Activated T-helper 2 cell treated with anti-CD3 and anti-CD28 coated beads, Interferon-gamma antibody, Interleukin-2, Interleukin-4, amounts not matched to agents 10 μg/mL and 5 μg/mL and 100 μg/mL, durations not matched to agents 14 hours and 24 hours and 36 hours (primary cell): ENCODE measurements at regions of chr14 and their contacts with region 1.

Region 1: GRCh38 chr14:54566410-54567223 is at the start of gene SAMD4A:
- DNase-seq: peak; percentile 43
- H3K4me3 Mint-ChIP-seq: peak within 1 kb of the TSS; percentile 91
- H3K27ac Mint-ChIP-seq: peak within 1 kb of the TSS; percentile 84
- H3K4me1 Mint-ChIP-seq: peaks cover 17% of the 10 kb centered on the region
- H3K27me3 Mint-ChIP-seq: peaks cover 25% of the 10 kb centered on the region
- total RNA-seq, gene SAMD4A: 4.3 and 5.1 TPM in 2 replicates

Region 2: DNA sequence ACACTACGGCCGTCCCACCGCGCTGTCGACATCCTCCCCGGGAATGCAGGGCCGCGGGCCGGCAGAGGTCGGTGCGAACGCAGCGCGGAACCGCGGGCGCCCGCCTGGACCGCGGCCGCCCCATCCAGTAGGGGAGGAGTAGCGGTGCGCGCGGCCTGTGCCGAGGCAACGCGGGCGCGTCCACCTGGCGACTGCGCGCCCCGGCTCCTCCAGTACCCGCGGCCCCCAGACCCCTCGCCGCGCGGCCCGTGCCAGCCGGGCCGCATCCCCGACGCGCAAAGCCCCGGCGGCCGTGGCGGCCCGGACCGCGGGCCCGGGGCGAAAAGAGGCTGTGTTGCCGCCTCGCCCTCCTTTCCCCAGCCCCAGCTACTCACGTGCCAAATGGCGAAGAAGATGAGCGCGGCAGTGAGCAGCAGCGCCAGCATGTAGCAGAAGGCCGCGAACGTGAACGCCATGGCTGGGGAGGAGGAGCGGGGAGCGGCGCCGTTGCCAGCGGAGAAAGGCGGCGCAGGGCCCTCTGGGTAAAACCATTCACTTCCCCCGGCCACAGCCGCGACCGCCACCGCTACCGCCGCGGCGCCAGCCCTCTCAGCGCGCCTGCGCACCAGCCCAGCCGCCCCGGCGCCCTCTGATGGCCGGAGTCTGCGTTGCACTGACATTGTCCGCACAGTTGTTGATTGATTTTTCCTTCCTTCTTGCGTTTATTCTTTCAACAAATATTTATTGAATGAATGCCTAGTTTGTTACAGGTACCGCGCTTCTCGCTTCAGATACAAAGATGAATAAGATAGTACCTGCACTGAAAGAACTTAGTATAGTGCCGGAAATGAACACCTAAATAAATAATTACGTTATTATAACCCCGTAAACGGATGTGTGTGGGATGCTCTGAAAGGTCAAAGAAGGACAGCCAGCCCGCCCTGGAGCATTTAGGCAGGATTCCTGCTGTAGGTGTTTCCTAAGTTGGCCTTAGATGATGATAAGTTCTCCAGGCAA is 125.4 kb before region 1 on chr14 and contains the start of gene CNIH1:
- intact Hi-C with region 1: loop called (anchors 5 kb)
- DNase-seq: peak; percentile 90
- H3K4me3 Mint-ChIP-seq: peak within 1 kb of the TSS; percentile 95
- H3K27ac Mint-ChIP-seq: peak within 1 kb of the TSS; percentile 97
- H3K4me1 Mint-ChIP-seq: peaks cover 47% of the 10 kb centered on the region
- H3K27me3 Mint-ChIP-seq: peaks cover 5% of the 10 kb centered on the region
- total RNA-seq, gene CNIH1: 113 and 115 TPM in 2 replicates

Region 3: DNA sequence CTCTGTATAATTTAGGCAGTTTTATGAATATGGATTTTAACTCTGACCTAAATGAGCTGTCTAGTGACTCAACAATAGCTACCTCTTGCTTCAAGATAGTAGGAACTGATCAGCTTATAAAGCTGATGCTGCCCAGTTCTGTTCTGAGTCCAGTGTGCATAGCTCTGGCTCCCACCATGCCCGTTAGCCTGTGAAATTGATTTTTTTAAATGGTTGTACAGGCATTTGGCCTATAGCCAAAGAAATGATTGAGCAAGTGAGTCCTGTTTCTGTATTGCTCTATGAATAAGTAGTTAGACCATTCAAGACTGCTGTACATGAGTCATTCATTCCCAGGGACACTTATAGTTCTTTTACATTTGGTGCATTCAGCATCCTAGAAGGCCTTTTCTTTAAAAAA is 36.7 kb after region 1 on chr14:
- intact Hi-C with region 1: no loop called
- DNase-seq: no peak
- H3K4me3 Mint-ChIP-seq: no peak overlapping the region
- H3K27ac Mint-ChIP-seq: no peak overlapping the region
- H3K4me1 Mint-ChIP-seq: no peaks in the 10 kb centered on the region
- H3K27me3 Mint-ChIP-seq: peaks cover 18% of the 10 kb centered on the region

Region 4: DNA sequence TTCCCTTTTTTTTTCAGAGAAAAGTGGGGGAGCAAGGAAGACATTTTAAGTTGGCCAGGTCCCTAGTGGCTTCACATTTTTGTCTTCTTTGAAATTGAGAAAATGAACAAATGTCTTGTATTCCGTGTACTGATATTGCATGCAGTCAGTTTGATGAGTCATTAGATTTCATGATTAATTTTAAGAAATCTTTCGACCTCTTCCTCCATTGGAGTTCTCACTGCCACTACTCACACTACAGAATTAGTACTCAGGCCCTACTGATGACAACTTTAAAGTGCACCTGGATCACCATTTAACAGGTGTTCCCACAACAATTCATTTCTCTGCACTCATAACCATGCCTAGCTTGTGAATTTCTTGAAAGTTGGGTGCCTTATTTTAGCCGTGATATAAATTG is 50.9 kb after region 1 on chr14:
- intact Hi-C with region 1: no loop called
- DNase-seq: no peak
- H3K4me3 Mint-ChIP-seq: no peak overlapping the region
- H3K27ac Mint-ChIP-seq: no peak overlapping the region
- H3K4me1 Mint-ChIP-seq: peaks cover 16% of the 10 kb centered on the region
- H3K27me3 Mint-ChIP-seq: peaks cover 14% of the 10 kb centered on the region

Region 5: DNA sequence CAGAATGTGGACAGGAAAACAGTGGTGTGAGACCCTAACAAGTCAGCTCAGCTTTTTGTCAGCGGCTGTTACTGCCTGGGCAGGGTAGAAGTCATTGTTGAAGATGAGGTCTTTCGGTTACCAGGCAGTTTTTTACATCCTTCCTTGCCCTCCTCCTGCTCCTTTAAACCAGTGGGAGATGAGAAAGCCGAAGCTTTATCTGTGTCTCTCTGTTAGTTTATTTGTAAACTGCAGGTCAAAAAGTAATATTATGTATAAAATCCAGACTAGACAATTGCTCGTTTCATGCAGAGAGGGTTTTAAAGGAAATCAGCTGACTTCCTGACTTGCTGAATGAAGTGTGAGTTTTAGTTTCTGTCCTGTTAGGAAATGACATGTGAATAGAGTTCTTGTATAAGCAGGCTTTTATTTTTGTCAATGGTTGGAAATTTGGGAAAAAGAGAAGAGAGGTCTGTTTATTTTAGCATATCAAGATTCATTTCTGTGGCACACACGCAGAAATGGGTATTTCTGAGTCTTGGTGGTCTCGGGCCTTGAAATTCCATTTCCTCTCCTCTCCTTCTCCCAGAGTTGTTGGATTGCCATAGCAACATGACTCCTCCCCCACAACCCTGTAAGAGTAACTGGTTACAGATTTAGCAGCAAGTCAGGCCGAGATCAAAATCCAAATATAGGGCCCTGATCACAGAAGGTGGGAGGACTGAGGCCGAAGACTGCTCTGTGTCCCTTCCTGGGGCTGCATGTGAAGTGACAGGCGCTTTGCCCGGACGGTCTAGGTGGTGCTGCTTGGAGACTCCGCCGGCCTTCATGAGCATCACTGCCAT is 61.1 kb after region 1 on chr14:
- intact Hi-C with region 1: loop called (anchors 5 kb)
- DNase-seq: peak; percentile 27
- H3K4me3 Mint-ChIP-seq: peak overlapping the region; percentile 52
- H3K27ac Mint-ChIP-seq: peak overlapping the region; percentile 76
- H3K4me1 Mint-ChIP-seq: peaks cover 44% of the 10 kb centered on the region
- H3K27me3 Mint-ChIP-seq: no peaks in the 10 kb centered on the region

Region 6: DNA sequence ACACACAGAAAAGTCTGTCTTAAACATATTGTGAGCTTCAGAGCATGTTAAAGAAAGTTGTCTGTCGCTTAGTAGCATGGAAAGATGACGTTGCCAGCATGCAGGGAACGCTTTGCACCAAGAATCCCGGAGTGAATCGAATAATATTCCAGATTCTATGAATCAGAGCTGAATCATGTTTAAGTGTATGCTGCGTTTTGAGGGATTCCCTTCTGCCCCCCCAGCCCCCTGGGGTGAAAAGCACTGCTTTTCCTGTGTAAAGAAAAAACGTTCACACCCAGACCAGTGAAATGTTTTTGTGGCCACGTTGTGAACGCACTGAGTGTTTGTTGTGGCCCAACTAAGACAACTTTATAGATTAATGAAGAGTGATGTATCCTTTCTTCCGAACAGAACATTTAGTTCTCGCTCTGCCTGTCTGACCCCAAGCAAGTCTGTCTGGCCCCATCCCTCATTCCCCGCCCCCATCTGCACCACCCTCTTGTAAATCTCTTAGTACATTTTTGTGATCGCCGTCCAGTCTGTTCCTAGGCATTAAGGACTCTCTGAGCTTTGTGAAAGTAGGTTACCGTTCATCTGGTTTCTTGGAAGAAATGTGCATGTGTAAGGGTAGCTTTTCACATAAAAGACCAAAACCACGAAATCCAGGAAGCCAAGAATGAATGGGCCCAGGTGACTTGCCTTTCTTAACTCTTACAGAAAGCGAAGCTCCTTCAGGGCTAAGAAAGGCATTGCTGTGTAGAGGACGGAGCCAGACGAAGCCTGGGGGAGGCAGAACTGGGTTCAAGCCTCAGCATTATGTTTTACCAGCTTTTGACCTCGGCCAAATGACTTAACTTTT is 103.3 kb after region 1 on chr14:
- intact Hi-C with region 1: loop called (anchors 5 kb)
- DNase-seq: no peak
- H3K4me3 Mint-ChIP-seq: no peak overlapping the region
- H3K27ac Mint-ChIP-seq: no peak overlapping the region
- H3K4me1 Mint-ChIP-seq: peaks cover 51% of the 10 kb centered on the region
- H3K27me3 Mint-ChIP-seq: peaks cover 21% of the 10 kb centered on the region

Region 7: GRCh38 chr14:54730156-54730961 is 163.7 kb after region 1 on chr14:
- intact Hi-C with region 1: loop called (anchors 2 kb)
- DNase-seq: peak; percentile 37
- H3K4me3 Mint-ChIP-seq: peak overlapping the region; percentile 24
- H3K27ac Mint-ChIP-seq: peak overlapping the region; percentile 93
- H3K4me1 Mint-ChIP-seq: peaks cover 44% of the 10 kb centered on the region
- H3K27me3 Mint-ChIP-seq: peaks cover 20% of the 10 kb centered on the region

Region 8: GRCh38 chr14:54805521-54806322 is 239.1 kb after region 1 on chr14:
- intact Hi-C with region 1: loop called (anchors 1 kb)
- DNase-seq: peak; percentile 56
- H3K4me3 Mint-ChIP-seq: no peak overlapping the region
- H3K27ac Mint-ChIP-seq: no peak overlapping the region
- H3K4me1 Mint-ChIP-seq: peaks cover 2% of the 10 kb centered on the region
- H3K27me3 Mint-ChIP-seq: peaks cover 34% of the 10 kb centered on the region

Region 9: DNA sequence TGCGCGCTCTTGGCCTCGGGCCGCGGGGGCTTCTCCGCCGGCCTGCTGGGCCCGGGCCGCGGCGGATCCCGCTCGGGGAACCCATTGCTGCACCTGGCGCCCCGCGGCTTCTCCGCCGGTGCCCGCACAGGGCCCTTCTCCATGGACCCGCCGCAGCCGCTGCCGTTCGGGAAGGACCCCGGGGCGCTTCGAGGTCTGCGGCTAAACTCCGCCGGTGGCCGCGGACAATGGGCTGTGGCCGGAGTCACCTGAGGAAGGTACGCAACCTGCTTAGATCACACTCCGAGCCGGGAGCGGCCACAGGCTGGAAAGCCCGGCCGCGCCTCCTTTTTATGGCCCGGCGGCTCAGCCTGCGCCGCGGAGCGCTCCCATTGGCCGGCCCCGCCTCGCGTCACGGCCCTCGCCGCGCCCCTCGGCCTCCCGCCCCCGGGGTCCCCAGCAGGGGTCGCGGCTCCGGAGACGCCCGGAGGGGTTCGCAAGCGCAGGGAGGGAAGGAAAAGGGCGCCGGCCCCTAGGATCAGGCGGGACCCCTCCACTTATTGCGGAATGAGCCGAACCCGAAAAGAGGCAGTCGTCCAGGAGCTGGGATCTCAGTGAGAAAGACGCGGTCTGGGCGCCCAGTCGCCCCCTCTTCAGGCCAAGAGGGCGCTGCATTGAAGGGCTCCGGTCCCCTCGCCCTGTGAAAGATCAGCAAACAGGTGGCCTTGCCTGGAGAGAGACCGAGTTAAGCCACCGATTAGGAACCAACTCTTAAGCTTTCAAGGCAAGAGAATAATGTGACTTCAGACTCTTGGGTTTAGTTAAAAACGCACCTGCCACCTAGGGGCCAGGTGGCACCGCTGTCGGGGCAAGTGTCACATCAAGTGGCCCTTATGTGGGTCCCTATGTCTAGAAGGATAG is 336.2 kb after region 1 on chr14 and contains the start of gene GCH1:
- intact Hi-C with region 1: loop called (anchors 1 kb)
- DNase-seq: peak; percentile 75
- H3K4me3 Mint-ChIP-seq: peak within 1 kb of the TSS; percentile 85
- H3K27ac Mint-ChIP-seq: peak within 1 kb of the TSS; percentile 81
- H3K4me1 Mint-ChIP-seq: peaks cover 40% of the 10 kb centered on the region
- H3K27me3 Mint-ChIP-seq: no peaks in the 10 kb centered on the region
- total RNA-seq, gene GCH1: 51.4 and 52.5 TPM in 2 replicates